HAP-1 (cell line): ENCODE measurements at regions of chr7 and their contacts with region 1.

Region 1: DNA sequence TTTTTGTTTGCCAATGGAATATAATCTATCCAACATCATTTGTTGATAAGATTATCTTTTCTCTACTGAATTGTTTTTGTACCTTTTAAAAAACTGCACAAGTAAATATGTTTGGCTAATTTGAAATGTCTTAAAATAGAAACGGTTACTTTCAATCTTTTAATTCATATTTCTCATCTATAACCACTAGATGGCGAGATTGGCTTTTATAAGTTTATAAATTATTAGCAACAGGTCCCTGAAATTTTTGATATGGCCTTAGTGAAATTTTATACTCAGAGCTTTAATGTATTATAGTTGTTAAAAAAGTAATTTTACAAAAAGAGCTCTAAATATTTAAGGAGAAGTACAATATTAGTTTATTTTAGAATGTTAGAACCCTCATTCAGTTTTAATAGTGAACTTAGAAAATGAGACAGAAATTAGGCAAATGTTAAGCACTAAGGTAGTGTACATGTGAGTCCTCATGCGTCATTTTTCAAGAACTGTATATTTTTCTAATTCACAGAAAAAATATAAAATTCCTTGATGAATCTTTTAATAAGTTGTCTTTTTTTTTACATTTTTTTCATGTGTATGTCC is 592.5 kb downstream of the ARL4A start:
- DNase-seq: peak in 1 of 2 experiments; percentile 28
- H3K4me3 ChIP-seq: no peak overlapping the region
- H3K4me1 ChIP-seq: no peaks in the 10 kb centered on the region
- H3K27me3 ChIP-seq: peaks cover 2% of the 10 kb centered on the region; the same call in 1 of the 2 replicates

Region 2: GRCh38 chr7:14457568-14458453 is 1177.9 kb after region 1 on chr7:
- in situ Hi-C with region 1: loop called (anchors 25 kb)
- DNase-seq: peak; percentile 77 to 81
- H3K4me3 ChIP-seq: no peak overlapping the region
- H3K4me1 ChIP-seq: no peaks in the 10 kb centered on the region
- H3K27me3 ChIP-seq: no peaks in the 10 kb centered on the region

Region 3: DNA sequence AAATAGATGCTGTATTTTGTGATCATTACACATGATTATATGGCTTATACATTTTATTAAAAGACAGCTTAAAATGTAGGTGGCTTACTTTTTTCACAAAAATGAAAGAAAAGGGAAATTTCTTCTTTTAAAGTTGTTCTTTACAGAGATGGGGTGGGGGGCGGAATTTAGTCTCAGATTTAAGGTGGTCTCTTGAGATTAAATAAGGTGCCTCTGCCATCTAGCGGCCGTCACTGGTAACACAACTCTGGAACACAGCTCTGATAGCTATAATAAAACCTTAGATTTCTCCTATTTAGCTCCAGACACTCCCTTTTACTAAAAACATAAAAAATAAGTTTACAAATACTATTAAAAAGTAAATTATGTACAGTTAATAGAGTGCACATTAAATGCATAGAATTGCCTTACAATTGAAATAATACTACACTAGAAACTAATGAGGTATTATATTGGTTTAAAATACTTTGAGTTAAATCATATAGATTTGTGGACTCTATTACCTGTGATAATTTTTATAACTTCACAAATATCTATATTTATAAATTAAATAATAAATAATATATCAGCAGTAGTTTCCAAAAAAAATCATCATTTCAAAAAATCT is 1411.8 kb after region 1 on chr7:
- in situ Hi-C with region 1: loop called (anchors 25 kb)
- DNase-seq: peak in 1 of 2 experiments; percentile 71
- H3K4me3 ChIP-seq: no peak overlapping the region
- H3K4me1 ChIP-seq: no peaks in the 10 kb centered on the region
- H3K27me3 ChIP-seq: no peaks in the 10 kb centered on the region; the same call in none of the 2 replicates